SK-N-SH (cell line): ENCODE measurements at regions of chr16 and their contacts with region 1.

Region 1: GRCh38 chr16:2942045-2942444 is 22.0 kb upstream of the KREMEN2 start:
- DNase-seq: no peak
- H3K4me3 ChIP-seq: no peak overlapping the region
- H3K27ac ChIP-seq: no peak overlapping the region
- H3K4me1 ChIP-seq: no peaks in the 10 kb centered on the region
- H3K27me3 ChIP-seq: no peaks in the 10 kb centered on the region
- CTCF ChIP-seq: no peak
- EP300 ChIP-seq: no peak
- RAD21 ChIP-seq: no peak

Region 2: DNA sequence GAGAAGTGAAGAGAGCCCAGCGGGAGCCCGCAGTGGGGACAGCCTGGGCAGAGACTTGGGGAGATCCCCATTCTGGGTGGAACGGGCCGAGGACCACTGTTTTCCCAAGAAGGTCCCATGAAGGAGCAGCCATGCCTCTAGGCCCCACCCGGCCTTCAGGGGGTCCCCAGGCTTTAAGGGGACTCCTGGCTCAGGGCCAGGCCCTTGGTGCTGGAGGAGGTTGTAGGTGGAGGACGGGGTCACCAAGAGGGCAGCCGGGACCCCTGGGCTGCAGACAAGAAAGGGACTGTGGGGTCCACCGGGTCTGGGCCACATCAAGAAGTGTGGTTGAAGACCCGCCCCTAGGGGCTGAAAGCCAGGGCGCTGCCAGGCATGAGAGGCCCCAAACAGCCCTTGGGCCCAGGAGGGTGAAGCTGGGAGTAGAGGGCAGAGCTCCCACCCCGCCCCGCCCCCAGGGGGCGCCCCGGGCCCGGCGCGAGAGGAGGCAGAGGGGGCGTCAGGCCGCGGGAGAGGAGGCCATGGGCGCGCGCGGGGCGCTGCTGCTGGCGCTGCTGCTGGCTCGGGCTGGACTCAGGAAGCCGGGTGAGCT is 125.2 kb before region 1 on chr16 and contains the start of gene PRSS21:
- CTCF ChIA-PET with region 1: no interaction called
- POLR2A ChIA-PET with region 1: no interaction called
- DNase-seq: no peak
- H3K4me3 ChIP-seq: no peak within 1 kb of the TSS
- H3K27ac ChIP-seq: no peak within 1 kb of the TSS
- H3K4me1 ChIP-seq: peaks cover 0 to 20% of the 10 kb centered on the region in 2 experiments; a peak in 1 of 4 replicates
- H3K27me3 ChIP-seq: no peaks in the 10 kb centered on the region; the same call in 1 of the 2 replicates
- CTCF ChIP-seq: no peak
- EP300 ChIP-seq: no peak
- RAD21 ChIP-seq: no peak
- polyA plus RNA-seq, gene PRSS21: not detected in 2 replicates

Region 3: DNA sequence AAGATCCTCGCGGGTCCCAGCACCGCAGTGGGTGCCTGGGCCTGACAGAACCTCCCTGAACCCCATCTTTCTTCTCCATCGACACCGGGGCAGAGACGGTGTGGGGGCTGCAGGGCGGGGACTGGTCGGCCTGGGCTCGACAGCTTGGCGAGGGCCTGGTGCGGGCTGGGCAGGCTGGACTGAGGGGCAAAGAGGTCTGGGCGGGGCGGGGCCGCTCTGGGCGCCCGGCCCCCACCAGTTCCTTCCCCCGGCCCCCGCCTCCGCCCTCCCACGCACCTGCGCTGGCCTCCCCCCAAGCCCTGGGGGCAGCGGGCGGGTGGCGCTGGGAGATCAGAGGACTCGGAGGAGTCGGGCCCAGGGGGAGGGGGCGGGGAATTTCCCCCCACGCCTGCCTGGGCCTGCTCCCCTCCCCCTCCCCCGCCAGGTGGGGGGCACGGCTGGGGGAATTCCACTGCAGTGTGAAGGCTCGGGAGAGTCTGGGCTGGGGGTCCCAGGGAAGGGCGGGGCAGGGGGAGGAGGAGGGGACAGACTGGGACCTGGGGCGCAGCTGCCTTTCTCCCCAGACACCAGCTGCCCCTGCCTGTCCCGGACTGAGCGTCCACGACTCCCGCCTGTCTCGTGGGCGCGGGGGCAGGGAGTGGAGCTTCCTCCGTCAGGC is 21.1 kb after region 1 on chr16:
- CTCF ChIA-PET with region 1: interaction called, 21 read pairs
- POLR2A ChIA-PET with region 1: no interaction called
- DNase-seq: no peak
- H3K4me3 ChIP-seq: peak overlapping the region; percentile 50 to 61
- H3K27ac ChIP-seq: no peak overlapping the region
- H3K4me1 ChIP-seq: peaks cover 0 to 14% of the 10 kb centered on the region in 2 experiments; a peak in 1 of 4 replicates
- H3K27me3 ChIP-seq: peaks cover 28% of the 10 kb centered on the region
- CTCF ChIP-seq: no peak
- EP300 ChIP-seq: no peak
- RAD21 ChIP-seq: no peak

Region 4: DNA sequence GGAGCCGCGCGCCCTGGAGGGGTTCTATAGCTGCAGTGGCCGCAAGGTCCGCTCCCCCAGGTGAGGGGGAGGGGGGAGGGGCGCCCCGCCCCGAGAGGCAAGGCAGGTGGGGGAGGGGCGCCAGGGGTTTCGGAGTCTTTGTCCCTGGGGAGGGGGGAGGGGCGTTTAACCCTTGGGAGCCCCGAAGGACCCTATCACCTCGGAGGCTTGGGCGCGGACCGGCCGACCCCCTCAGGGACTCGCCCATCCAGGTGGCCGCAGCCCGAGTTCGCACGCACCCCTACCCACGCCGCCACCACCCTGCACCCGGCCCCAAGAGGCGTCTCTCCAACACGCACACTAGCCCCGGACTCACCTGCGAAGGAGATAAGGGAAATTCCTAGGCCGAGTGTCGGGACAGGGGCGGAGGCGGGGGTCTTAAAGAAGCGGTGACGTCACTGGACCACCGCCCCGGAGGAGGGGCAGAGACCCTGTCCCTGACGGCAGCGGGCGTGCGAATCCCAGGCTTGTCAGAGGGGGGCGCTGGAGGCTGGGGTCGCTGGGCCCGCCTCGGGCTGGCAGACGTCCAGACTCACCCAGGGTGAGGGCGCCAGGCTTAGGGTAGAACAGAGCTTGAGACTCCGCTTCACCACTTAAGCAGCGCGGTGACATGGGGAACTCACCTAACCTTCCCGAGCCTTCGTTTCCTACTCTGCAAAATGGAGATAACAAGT is 75.9 kb after region 1 on chr16 and contains the start of gene CLDN6:
- CTCF ChIA-PET with region 1: no interaction called
- POLR2A ChIA-PET with region 1: no interaction called
- DNase-seq: peak; percentile 92
- H3K4me3 ChIP-seq: peak within 1 kb of the TSS in 1 of 2 experiments; percentile 13; a peak in 1 of 4 replicates
- H3K27ac ChIP-seq: no peak within 1 kb of the TSS
- H3K4me1 ChIP-seq: peaks cover 6 to 29% of the 10 kb centered on the region in 2 experiments; a peak in 3 of 4 replicates
- H3K27me3 ChIP-seq: no peaks in the 10 kb centered on the region
- CTCF ChIP-seq: peak; percentile 50
- EP300 ChIP-seq: no peak
- RAD21 ChIP-seq: no peak
- polyA plus RNA-seq, gene CLDN6: 0.20 and 0.24 TPM in 2 replicates